ENCODE measurements at regions of chr19 and their contacts with region 1.

Region 1: DNA sequence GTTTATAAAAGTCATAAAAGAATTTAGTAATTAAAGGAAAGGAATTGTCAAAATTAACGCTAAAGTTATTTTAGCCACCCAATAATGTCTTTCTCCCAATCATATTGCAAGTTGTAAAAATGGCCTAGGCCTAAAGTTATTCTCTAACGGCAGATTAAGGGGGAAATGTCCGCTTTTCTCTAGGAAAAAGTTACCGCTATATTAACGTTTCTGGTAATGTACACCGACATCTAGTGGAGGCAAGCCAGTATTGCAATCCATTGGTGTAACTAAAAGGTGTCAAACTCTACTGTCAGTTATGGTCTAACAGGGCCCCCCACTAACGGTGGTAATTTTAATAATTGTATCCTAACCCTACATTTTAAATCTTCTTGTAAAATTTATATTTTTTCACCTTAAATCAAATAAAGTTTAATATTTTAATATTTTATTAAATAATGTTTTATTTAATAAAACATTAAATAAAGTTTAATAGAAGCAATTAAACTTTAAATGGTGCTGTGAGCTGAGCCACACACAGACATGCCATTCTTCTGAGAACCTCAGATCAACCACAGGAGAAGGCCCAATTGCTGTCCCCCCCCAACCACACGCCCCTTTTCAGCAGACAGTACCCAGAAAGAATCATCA is 35.9 kb upstream of the ZSCAN5A start:
- DNase-seq: peak in 1 of 2 donors; percentile 4
- ATAC-seq: no peak
- H3K4me3 ChIP-seq: peak overlapping the region in 1 of 4 donors; percentile 18
- H3K27ac ChIP-seq: no peak overlapping the region
- H3K4me1 ChIP-seq: no peaks in the 10 kb centered on the region
- H3K27me3 ChIP-seq: no peaks in the 10 kb centered on the region
- CTCF ChIP-seq: peak; percentile 59 to 86 (median 77)
- POLR2A ChIP-seq: no peak

Region 2: GRCh38 chr19:56066152-56067023 is 284.1 kb before region 1 on chr19:
- in situ Hi-C with region 1: loop called (anchors 5 to 10 kb)
- intact Hi-C with region 1: no loop called
- DNase-seq: peak in 1 of 2 donors; percentile 35
- ATAC-seq: peak in 1 of 2 donors; percentile 62
- H3K4me3 ChIP-seq: peak overlapping the region in 1 of 4 donors; percentile 7
- H3K27ac ChIP-seq: no peak overlapping the region
- H3K4me1 ChIP-seq: no peaks in the 10 kb centered on the region
- H3K27me3 ChIP-seq: peaks cover 0 to 5% (median 2%) of the 10 kb centered on the region in 3 donors
- CTCF ChIP-seq: peak; percentile 44 to 88 (median 71)
- POLR2A ChIP-seq: no peak

Region 3: DNA sequence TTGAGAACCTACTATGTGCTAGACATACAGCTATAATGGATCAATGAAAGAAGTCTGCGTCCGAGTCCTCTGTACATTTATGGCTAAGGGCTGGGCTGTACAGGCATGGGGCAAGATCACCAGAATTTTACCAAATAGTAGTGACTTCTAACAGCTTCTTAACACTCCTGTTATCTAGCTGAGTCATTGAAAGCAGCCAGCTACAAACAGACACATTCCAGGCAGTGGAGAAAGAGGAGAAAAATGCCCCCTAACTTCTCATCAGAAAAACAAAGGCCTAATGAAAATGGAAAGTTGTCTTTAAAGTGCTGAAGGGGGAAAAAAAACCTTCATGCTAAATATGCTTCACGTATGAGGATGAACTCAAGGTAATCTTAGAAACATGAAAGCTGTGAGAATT is 140.9 kb after region 1 on chr19:
- in situ Hi-C with region 1: no loop called
- intact Hi-C with region 1: no loop called
- DNase-seq: no peak
- ATAC-seq: no peak
- H3K4me3 ChIP-seq: no peak overlapping the region
- H3K27ac ChIP-seq: no peak overlapping the region
- H3K4me1 ChIP-seq: no peaks in the 10 kb centered on the region
- H3K27me3 ChIP-seq: no peaks in the 10 kb centered on the region
- CTCF ChIP-seq: no peak
- POLR2A ChIP-seq: no peak